Mammary epithelial cell (primary cell): ENCODE measurements at regions of chr17 and their contacts with region 1.

Region 1: DNA sequence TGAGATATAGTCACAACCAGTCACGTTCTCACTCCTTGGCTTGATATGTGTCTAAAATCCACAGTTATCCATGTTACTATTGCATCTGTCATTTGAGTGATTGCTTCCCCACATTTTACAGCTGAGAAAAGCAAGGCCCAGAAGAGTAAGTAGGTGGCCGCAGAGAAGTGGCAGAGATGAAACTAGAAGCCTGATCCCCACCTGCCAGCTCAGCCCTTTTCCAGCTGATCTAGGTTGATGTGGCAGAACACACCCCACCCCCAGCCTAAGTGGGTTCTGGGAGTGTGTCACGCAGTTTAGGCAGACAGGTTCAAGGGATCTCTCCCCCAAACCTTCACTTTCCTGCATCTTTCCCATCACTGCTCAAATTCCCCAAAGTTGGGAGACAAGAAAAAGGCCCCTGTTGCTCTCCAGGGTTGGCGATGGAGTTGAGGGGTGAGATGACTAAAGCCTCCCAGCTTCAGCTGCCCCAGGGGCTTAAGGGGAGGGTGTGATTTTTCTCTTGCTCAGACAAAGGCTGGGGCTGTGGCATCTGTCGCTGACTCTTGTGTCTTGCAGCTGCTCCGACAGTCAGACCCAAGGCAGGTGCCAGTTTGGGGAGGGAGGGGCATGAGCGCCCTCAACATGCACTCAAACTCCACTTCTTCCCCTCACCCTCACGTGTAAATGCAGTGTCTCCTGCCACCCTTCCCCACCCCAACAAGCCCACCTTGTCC is 48.9 kb upstream of the LHX1 start:
- DNase-seq: no peak
- H3K4me3 ChIP-seq: no peak overlapping the region
- H3K27ac ChIP-seq: no peak overlapping the region
- H3K4me1 ChIP-seq: no peaks in the 10 kb centered on the region
- H3K27me3 ChIP-seq: no peaks in the 10 kb centered on the region
- CTCF ChIP-seq: no peak

Region 2: GRCh38 chr17:36665417-36665816 is 223.0 kb before region 1 on chr17:
- CTCF ChIA-PET with region 1: no interaction called
- dilution Hi-C with region 1: loop called (anchors 5 kb)
- in situ Hi-C with region 1: no loop called
- intact Hi-C with region 1: no loop called
- DNase-seq: peak; percentile 20
- H3K4me3 ChIP-seq: no peak overlapping the region
- H3K27ac ChIP-seq: no peak overlapping the region
- H3K4me1 ChIP-seq: no peaks in the 10 kb centered on the region
- H3K27me3 ChIP-seq: no peaks in the 10 kb centered on the region
- CTCF ChIP-seq: no peak

Region 3: DNA sequence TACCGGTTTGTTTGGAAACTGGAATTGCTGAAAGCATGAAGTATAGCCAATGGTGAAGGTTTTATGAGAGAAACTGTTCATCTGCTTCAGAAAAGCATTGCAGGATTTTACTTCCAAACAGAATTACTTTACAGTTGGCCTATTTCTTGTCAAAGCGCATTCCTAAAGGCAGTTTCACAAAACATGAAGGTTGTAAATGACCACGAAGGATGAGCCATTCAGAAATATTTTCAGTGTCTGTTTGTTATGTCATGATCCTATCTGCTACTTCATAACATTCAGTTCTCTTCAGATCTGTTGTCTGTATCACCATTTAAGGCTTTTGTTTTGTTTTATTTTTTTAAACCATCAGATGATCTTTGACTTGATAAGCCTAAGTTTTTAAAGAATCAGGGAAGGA is 106.0 kb after region 1 on chr17:
- CTCF ChIA-PET with region 1: no interaction called
- dilution Hi-C with region 1: no loop called
- in situ Hi-C with region 1: no loop called
- intact Hi-C with region 1: no loop called
- DNase-seq: peak; percentile 30
- H3K4me3 ChIP-seq: no peak overlapping the region
- H3K27ac ChIP-seq: no peak overlapping the region
- H3K4me1 ChIP-seq: no peaks in the 10 kb centered on the region
- H3K27me3 ChIP-seq: no peaks in the 10 kb centered on the region
- CTCF ChIP-seq: no peak